Activated CD4-positive, alpha-beta T cell treated with anti-CD3 and anti-CD28 coated beads, Interleukin-2, amount 10 ng/mL, durations not matched to agents 24 days and 14 days (primary cell): ENCODE measurements at regions of chr17 and their contacts with region 1.

Region 1: DNA sequence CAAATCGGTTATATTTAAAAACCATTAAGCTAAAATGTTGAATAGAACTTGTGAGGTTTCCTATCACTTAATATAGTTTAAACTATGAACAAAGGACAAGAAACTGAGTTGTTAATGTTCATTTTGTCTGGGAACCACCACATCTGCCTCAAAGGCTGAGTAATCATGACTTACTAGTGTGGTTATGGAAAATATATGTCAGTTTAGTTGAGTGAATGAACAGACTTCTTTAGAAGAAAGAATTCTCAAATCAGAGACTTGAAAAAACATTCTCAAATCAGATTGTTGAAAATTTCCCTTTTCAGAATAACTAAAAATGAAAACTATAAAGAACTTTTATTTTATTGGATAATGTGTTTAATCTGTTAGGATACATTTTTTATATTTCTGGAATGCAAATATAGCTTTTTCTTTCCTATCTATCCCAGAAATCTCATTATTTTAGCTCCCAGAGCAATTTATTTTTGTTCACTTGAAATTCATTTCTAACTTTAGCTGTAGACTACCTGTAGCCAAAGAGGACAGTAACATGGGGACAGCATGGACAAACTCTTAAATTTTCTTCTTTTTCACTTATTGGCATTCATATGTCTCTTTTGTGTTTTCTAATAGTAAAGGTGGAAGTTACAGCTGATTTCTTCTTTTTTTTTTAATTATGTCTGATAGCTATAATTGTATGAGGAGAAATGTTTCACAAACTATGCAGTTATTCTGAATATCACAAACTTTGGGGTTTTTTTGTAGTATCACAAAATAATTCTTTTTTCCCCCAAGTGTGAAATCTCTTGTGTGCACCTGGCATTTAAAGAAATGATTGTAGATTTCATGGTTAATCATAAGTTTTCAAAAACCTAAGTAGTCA is 55.3 kb downstream of the VMP1 start:
- DNase-seq: peak; percentile 76
- H3K4me3 Mint-ChIP-seq: peak overlapping the region; percentile 55
- H3K27ac Mint-ChIP-seq: peak overlapping the region; percentile 96
- H3K4me1 Mint-ChIP-seq: peaks cover 41% of the 10 kb centered on the region
- H3K27me3 Mint-ChIP-seq: no peaks in the 10 kb centered on the region

Region 2: DNA sequence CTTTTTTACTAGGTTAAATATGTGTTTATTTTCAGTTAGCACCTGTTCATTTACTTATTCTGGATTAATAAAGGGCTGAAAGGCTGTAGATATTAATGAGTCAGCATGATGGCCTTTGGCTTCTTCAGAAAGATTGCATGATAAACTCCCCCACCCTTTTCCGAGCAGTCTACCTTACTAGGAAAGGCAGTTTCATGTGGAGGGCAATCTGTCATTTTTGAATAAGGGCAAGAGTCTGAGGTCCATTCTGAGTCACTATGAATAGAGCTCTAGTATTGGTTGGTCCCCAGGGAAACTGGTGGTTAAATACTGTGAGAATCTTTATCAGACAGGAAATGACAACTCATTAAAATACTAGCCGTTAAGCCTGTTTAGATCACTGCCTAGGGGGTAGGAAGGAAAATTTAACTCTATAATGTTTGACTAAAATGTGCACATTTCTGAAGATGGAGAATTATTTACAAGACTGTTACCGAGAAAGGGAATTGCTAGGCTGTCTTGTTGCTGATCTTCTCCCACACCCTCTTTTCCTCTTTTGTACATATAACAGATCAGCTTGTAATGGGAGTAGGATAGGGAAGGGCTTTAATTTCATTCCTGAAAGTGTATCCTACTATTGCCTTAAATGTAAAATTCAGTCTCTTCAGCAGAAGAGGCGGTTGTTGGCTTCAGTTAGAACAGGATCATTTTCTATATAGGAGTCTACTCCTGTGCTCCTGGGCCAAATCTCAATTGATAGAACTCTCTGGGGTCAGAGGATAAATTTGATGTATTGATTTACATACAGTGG is 66.7 kb after region 1 on chr17:
- intact Hi-C with region 1: loop called (anchors 1 kb)
- DNase-seq: peak; percentile 89
- H3K4me3 Mint-ChIP-seq: peak overlapping the region; percentile 86
- H3K27ac Mint-ChIP-seq: peak overlapping the region; percentile 97
- H3K4me1 Mint-ChIP-seq: peaks cover 72% of the 10 kb centered on the region
- H3K27me3 Mint-ChIP-seq: no peaks in the 10 kb centered on the region